ENCODE measurements at regions of chr9 and their contacts with region 1.

Region 1: GRCh38 chr9:136283291-136284235 is 20.3 kb downstream of the CCDC187 start:
- H3K4me3 ChIP-seq: no peak overlapping the region
- H3K27ac ChIP-seq: no peak overlapping the region
- H3K4me1 ChIP-seq: no peaks in the 10 kb centered on the region
- CTCF ChIP-seq: peak; percentile 92

Region 2: GRCh38 chr9:136051517-136052432 is 231.8 kb before region 1 on chr9:
- CTCF ChIA-PET with region 1: no interaction called
- POLR2A ChIA-PET with region 1: no interaction called
- H3K4me3 ChIP-seq: peak overlapping the region; percentile 53
- H3K27ac ChIP-seq: peak overlapping the region; percentile 98
- H3K4me1 ChIP-seq: peaks cover 8% of the 10 kb centered on the region
- CTCF ChIP-seq: no peak; the same call in 1 of the 2 replicates

Region 3: GRCh38 chr9:136138566-136138965 is 145.0 kb before region 1 on chr9:
- CTCF ChIA-PET with region 1: interaction called, 11 read pairs
- POLR2A ChIA-PET with region 1: no interaction called
- H3K4me3 ChIP-seq: no peak overlapping the region
- H3K27ac ChIP-seq: no peak overlapping the region
- H3K4me1 ChIP-seq: no peaks in the 10 kb centered on the region
- CTCF ChIP-seq: peak; percentile 29; the same call in 1 of the 2 replicates

Region 4: GRCh38 chr9:136170006-136170901 is 113.3 kb before region 1 on chr9:
- CTCF ChIA-PET with region 1: interaction called, 13 read pairs
- POLR2A ChIA-PET with region 1: no interaction called
- H3K4me3 ChIP-seq: no peak overlapping the region
- H3K27ac ChIP-seq: no peak overlapping the region
- H3K4me1 ChIP-seq: peaks cover 4% of the 10 kb centered on the region; the same call in 1 of the 2 replicates
- CTCF ChIP-seq: peak; percentile 58

Region 5: GRCh38 chr9:136267261-136268111 is 16.1 kb before region 1 on chr9:
- CTCF ChIA-PET with region 1: interaction called, 16 read pairs
- POLR2A ChIA-PET with region 1: interaction called, 3 read pairs
- H3K4me3 ChIP-seq: peak overlapping the region; percentile 21
- H3K27ac ChIP-seq: no peak overlapping the region
- H3K4me1 ChIP-seq: no peaks in the 10 kb centered on the region
- CTCF ChIP-seq: peak; percentile 51; the same call in 1 of the 2 replicates

Region 6: DNA sequence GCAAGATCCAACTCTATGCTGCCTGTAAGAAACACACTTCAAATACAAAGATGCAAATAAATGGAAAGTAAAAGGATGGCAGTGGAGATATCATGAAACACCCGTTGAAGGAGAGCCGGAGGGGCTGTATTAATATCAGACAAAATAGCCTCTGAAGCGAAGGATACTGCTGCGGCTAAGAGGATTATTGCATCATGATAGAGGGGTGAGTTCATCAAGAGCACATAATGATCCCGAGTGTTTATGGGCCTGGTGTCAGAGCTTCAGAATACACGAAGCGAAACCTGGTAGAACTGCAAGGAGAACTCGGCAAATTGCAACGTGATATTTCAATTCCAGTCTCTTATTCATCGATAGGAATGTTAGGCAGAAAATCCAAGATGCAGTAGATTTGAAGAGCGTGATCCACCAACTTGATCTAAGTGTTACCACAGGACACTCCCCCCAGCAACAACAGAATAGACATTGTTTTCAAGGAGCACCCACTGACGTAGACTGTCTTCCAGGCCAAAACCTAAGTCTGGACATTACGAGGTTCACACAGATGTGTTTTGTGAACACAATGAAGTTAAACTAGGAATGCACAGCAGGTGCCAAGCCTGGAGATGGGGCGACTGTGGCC is 10.2 kb before region 1 on chr9:
- CTCF ChIA-PET with region 1: interaction called, 16 read pairs
- POLR2A ChIA-PET with region 1: no interaction called
- H3K4me3 ChIP-seq: no peak overlapping the region
- H3K27ac ChIP-seq: no peak overlapping the region
- H3K4me1 ChIP-seq: no peaks in the 10 kb centered on the region
- CTCF ChIP-seq: no peak

Region 7: GRCh38 chr9:136297016-136297691 is 13.6 kb after region 1 on chr9:
- CTCF ChIA-PET with region 1: interaction called, 14 read pairs
- POLR2A ChIA-PET with region 1: no interaction called
- H3K4me3 ChIP-seq: no peak overlapping the region
- H3K27ac ChIP-seq: no peak overlapping the region
- H3K4me1 ChIP-seq: no peaks in the 10 kb centered on the region
- CTCF ChIP-seq: no peak

Region 8: DNA sequence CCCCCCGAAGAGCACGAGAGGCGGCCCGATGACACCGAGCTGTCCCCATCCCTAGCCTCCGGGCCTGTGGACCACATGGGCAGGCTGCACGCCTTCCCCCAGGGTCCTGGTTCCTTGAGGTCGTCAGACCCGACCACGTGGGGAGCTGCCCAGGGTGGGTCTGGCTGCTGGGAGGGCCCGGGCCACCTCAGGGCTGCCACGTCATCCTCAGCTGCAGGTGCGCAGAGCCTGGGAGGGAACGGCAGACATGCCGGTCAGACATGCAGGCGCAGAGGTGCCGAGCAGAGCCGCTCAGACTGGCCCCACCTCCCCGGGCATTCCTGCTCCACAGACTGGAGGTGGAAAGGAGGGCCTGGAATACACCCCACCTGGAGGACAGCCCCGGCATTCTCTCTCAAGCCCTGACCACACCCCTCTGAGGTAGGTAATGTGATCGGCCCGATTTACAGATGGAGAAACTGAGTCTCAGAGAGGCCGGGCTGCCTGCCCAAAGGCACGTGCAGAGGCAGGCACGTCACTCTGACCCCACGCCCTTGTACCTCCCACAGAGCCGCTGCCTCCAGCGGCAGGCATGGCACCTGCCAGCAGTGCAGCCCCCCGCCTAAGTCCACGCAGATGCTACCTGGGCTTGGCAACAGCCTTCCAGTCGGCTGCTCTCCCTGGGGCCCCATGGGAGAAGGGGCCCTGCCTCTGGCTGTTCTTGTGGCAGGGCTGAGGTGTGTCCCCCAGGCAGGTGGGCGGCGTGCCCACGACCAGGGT is 19.7 kb after region 1 on chr9:
- CTCF ChIA-PET with region 1: interaction called, 14 read pairs
- POLR2A ChIA-PET with region 1: no interaction called
- H3K4me3 ChIP-seq: no peak overlapping the region
- H3K27ac ChIP-seq: no peak overlapping the region
- H3K4me1 ChIP-seq: no peaks in the 10 kb centered on the region
- CTCF ChIP-seq: no peak